ENCODE measurements at regions of chr1 and their contacts with region 1.

Region 1: GRCh38 chr1:21659099-21659923 is 9.8 kb downstream of the RAP1GAP start:
- DNase-seq: peak; percentile 40 to 81
- H3K4me3 ChIP-seq: no peak overlapping the region
- H3K27ac ChIP-seq: no peak overlapping the region
- H3K4me1 ChIP-seq: peaks cover 15% of the 10 kb centered on the region
- H3K27me3 ChIP-seq: no peaks in the 10 kb centered on the region
- CTCF ChIP-seq: peak; percentile 89

Region 2: DNA sequence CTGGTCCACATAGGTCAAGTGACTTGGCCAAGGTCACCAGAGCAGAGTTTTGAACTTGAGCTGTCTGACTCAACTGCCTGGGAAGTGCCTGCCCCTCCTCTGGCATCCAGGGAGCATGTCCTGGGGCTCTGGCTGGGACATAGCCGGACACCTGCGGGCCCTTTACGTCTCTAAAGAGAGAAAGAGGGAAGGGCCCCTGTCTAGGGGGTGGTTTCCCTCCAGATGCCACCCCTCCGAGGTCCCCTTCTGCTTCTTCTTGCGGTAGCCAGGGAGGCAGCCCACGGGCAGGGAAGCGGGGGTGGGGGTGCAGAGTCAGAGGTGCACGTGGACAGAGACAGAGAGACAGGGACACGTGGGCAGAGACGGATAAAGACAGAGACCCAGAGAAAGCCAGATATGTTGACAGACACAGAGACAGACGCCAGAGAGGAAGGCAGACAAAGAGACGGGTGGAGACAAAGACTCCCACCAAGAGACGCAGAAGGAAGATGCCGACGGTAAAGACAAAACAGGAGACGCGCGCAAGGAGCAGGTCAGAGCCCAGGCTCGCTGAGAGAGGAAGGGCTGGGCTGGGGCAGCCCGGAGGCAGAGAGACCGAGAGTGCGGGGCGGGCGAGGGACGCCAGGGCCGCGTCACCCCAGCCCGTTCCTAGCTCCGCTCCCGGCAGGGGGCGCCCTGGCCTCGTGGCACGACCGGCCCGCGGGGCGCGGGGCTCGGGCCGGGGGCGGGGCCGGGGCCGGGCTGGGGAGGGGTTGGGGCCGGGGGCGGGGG is 150.5 kb before region 1 on chr1:
- CTCF ChIA-PET with region 1: no interaction called
- POLR2A ChIA-PET with region 1: no interaction called
- intact Hi-C with region 1: loop called (anchors 5 kb)
- DNase-seq: peak in 1 of 2 experiments; percentile 53
- H3K4me3 ChIP-seq: no peak overlapping the region
- H3K27ac ChIP-seq: no peak overlapping the region
- H3K4me1 ChIP-seq: no peaks in the 10 kb centered on the region
- H3K27me3 ChIP-seq: no peaks in the 10 kb centered on the region
- CTCF ChIP-seq: peak; percentile 35; the same call in 1 of the 2 replicates

Region 3: GRCh38 chr1:21586846-21587601 is 72.3 kb before region 1 on chr1:
- CTCF ChIA-PET with region 1: no interaction called
- POLR2A ChIA-PET with region 1: no interaction called
- intact Hi-C with region 1: loop called (anchors 5 kb)
- DNase-seq: peak; percentile 71 to 90
- H3K4me3 ChIP-seq: no peak overlapping the region
- H3K27ac ChIP-seq: no peak overlapping the region
- H3K4me1 ChIP-seq: peaks cover 11% of the 10 kb centered on the region; the same call in 1 of the 2 replicates
- H3K27me3 ChIP-seq: no peaks in the 10 kb centered on the region
- CTCF ChIP-seq: no peak; the same call in 1 of the 2 replicates

Region 4: GRCh38 chr1:21624578-21625389 is 34.5 kb before region 1 on chr1:
- CTCF ChIA-PET with region 1: interaction called, 7 read pairs
- POLR2A ChIA-PET with region 1: no interaction called
- intact Hi-C with region 1: loop called (anchors 2 kb)
- DNase-seq: no peak
- H3K4me3 ChIP-seq: no peak overlapping the region
- H3K27ac ChIP-seq: 0 out of 2 replicates have a peak overlapping the region, but pooled peaks have one; percentile 96
- H3K4me1 ChIP-seq: peaks cover 57% of the 10 kb centered on the region
- H3K27me3 ChIP-seq: no peaks in the 10 kb centered on the region
- CTCF ChIP-seq: no peak

Region 5: GRCh38 chr1:21716169-21716568 is 56.9 kb after region 1 on chr1:
- CTCF ChIA-PET with region 1: no interaction called
- POLR2A ChIA-PET with region 1: no interaction called
- intact Hi-C with region 1: no loop called
- DNase-seq: no peak
- H3K4me3 ChIP-seq: no peak overlapping the region
- H3K27ac ChIP-seq: no peak overlapping the region
- H3K4me1 ChIP-seq: no peaks in the 10 kb centered on the region
- H3K27me3 ChIP-seq: no peaks in the 10 kb centered on the region
- CTCF ChIP-seq: no peak

Measured in PC-9 (cell line).